Left ventricle myocardium inferior (tissue), 1 donor: ENCODE measurements at regions of chr3 and their contacts with region 1.

Region 1: GRCh38 chr3:37210230-37210629 is 35.8 kb upstream of the LRRFIP2 start:
- DNase-seq: no peak
- H3K4me3 ChIP-seq: no peak overlapping the region
- H3K27ac ChIP-seq: peak overlapping the region; percentile 30
- H3K4me1 ChIP-seq: peaks cover 11% of the 10 kb centered on the region
- H3K27me3 ChIP-seq: no peaks in the 10 kb centered on the region
- CTCF ChIP-seq: no peak

Region 2: GRCh38 chr3:35448121-35448520 is 1762.1 kb before region 1 on chr3:
- intact Hi-C with region 1: no loop called
- DNase-seq: no peak
- H3K4me3 ChIP-seq: no peak overlapping the region
- H3K27ac ChIP-seq: no peak overlapping the region
- H3K4me1 ChIP-seq: no peaks in the 10 kb centered on the region
- H3K27me3 ChIP-seq: no peaks in the 10 kb centered on the region
- CTCF ChIP-seq: no peak

Region 3: GRCh38 chr3:37024092-37024491 is 186.1 kb before region 1 on chr3:
- intact Hi-C with region 1: loop called (anchors 5 kb)
- DNase-seq: no peak
- H3K4me3 ChIP-seq: no peak overlapping the region
- H3K27ac ChIP-seq: peak overlapping the region; percentile 85
- H3K4me1 ChIP-seq: peaks cover 57% of the 10 kb centered on the region
- H3K27me3 ChIP-seq: no peaks in the 10 kb centered on the region
- CTCF ChIP-seq: peak; percentile 62